Common myeloid progenitor, CD34-positive (primary cell): ENCODE measurements at regions of chr19 and their contacts with region 1.

Region 1: DNA sequence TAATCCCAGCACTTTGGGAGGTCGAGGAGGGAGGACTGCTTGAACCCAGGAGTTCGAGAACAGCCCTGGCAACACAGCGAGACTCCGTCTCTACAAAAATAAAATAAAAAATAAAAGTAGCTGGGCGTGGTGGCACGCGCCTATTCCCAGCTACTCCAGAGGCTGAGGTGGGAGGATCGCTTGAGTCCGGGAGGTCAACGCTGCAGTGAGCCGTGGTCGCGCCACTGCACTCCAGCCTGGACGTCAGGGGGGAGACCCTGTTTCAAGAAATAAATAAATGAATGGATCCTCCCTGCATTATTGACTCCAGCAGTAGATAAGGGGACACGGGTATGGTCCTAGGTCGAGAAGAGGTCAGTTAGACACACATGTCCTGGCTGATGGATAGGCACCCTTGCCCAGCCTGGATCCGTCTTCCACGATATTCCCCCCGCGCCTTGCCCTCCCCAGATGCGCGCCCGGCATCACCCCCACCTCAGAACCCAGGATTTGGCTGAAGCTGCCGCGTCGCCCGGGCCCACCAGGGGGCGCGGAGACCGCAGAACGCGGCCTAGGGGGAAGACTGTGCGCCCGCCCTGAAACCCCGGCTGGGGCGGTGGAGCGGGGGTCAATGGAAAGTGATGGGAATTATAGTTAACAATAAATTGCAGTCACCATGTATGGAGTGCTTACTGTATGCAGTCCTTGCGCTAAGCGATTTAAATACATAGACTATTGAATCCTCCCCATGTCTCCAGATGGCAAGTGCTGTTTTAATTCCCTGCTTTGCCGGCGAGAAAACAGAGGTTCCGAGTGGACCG is 2.1 kb upstream of the HOOK2 start:
- DNase-seq: peak; percentile 71 to 80 (median 79)
- H3K4me3 ChIP-seq: peak overlapping the region; percentile 27 to 90 (median 74)
- H3K27ac ChIP-seq: peak overlapping the region in 1 of 2 experiments; percentile 77
- H3K4me1 ChIP-seq: peaks cover 5 to 52% (median 51%) of the 10 kb centered on the region in 4 experiments
- H3K27me3 ChIP-seq: no peaks in the 10 kb centered on the region

Region 2: DNA sequence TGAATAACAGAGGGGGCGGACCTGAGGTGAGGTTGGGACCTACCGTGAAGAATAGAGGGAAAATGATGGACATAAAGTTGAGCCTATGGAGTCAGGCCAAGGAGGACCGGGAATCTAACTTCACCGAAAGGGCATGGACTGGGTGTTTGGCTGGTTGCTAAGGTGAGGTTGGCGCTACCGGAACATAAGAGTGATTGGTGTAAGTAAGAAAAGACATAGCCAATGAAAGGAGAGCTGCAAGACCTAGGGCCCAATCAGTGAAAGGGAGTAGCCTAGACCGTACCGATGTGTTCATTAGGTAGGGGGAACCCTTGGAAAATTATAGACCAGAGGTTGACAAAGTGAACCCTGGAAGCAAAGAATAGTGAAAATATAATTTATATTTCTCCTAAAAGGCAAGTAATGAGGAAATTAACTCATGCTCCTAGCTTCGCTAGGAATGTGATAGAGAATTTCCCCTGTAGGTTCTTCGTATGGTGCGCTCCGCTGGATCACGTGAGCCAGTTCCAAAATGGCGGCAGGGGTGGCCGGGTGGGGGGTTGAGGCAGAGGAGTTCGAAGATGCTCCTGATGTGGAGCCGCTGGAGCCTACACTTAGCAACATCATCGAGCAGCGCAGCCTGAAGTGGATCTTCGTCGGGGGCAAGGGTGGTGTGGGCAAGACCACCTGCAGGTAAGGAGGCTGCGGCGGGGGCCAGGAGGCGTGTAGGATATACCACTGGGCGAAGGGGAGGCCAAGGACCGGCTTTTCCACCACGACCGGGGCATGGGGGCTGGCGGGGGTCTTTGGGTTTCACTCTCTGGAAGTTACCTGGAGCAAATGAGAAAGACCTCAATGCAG is 40.2 kb before region 1 on chr19 and contains the start of gene GET3:
- CTCF ChIA-PET with region 1: interaction called, 776 read pairs
- POLR2A ChIA-PET with region 1: no interaction called
- DNase-seq: peak; percentile 99 to 100 (median 100)
- H3K4me3 ChIP-seq: peak within 1 kb of the TSS; percentile 76 to 95 (median 86)
- H3K27ac ChIP-seq: peak within 1 kb of the TSS; percentile 99 to 100
- H3K4me1 ChIP-seq: peaks cover 16 to 42% (median 37%) of the 10 kb centered on the region in 4 experiments
- H3K27me3 ChIP-seq: no peaks in the 10 kb centered on the region

Region 3: DNA sequence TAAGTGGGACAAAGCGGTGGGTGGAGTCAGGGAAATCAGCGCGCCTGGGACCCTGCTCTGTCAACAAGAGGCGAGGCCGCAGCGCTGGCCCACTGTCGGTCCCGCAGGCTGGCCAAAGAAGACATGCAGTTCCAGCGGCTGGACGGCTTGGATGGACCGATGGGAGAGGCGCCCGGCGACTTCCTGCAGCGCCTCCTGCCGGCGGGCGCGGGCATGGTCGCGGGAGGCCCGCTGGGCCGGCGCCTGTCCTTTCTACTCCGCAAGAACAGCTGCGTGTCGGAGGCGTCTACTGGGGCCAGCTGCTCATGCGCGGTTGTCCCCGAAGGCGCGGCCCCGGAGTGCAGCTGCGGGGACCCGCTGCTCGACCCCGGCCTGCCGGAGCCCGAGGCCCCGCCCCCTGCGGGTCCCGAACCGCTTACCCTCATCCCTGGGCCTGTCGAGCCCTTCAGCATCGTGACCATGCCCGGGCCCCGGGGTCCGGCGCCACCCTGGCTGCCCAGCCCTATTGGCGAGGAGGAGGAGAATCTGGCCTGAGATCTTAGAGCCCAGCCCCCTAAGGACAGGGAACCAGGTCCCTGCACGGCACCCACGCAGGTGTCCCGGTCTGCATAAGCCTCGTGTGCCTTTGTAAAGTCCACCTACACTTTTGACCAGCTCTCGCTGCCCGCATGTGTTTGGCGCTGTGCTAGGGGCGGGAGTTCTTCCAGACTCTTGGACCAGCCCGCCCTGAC is 19.7 kb before region 1 on chr19:
- CTCF ChIA-PET with region 1: interaction called, 54 read pairs
- POLR2A ChIA-PET with region 1: interaction called, 3 read pairs
- DNase-seq: peak; percentile 77 to 87 (median 87)
- H3K4me3 ChIP-seq: peak overlapping the region in 6 of 7 experiments; percentile 6 to 62 (median 37)
- H3K27ac ChIP-seq: no peak overlapping the region
- H3K4me1 ChIP-seq: peaks cover 0 to 8% (median 5%) of the 10 kb centered on the region in 4 experiments
- H3K27me3 ChIP-seq: peaks cover 0 to 19% (median 2%) of the 10 kb centered on the region in 5 experiments

Region 4: DNA sequence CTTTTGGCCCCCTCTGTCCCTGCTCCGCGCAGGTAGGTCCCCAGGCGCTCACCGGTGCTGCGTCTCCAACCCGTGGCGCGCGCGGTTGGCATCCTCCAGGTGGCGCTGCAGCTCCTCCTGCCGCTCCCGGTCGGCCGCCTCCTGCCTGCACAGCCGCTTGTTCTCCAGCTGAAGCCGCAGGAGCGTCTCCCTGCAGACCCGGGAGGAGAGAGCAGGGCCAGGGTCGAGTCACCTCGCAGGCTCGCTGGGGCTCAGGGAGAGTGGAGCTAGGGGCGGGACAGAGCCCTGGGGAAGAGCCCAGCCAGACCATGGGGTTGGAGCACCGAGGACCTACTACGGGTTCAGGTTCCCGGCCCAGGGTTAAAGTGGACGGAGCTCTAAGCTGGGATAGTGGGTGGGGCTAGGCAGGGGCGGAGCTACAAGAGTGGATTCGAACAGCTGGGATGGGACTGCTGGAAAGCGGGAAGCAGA is 11.3 kb before region 1 on chr19:
- CTCF ChIA-PET with region 1: interaction called, 54 read pairs
- POLR2A ChIA-PET with region 1: interaction called, 3 read pairs
- DNase-seq: peak in 1 of 3 donors; percentile 59
- H3K4me3 ChIP-seq: peak overlapping the region in 5 of 7 experiments; percentile 26 to 78 (median 51)
- H3K27ac ChIP-seq: no peak overlapping the region
- H3K4me1 ChIP-seq: peaks cover 2 to 6% (median 4%) of the 10 kb centered on the region in 4 experiments
- H3K27me3 ChIP-seq: no peaks in the 10 kb centered on the region

Region 5: DNA sequence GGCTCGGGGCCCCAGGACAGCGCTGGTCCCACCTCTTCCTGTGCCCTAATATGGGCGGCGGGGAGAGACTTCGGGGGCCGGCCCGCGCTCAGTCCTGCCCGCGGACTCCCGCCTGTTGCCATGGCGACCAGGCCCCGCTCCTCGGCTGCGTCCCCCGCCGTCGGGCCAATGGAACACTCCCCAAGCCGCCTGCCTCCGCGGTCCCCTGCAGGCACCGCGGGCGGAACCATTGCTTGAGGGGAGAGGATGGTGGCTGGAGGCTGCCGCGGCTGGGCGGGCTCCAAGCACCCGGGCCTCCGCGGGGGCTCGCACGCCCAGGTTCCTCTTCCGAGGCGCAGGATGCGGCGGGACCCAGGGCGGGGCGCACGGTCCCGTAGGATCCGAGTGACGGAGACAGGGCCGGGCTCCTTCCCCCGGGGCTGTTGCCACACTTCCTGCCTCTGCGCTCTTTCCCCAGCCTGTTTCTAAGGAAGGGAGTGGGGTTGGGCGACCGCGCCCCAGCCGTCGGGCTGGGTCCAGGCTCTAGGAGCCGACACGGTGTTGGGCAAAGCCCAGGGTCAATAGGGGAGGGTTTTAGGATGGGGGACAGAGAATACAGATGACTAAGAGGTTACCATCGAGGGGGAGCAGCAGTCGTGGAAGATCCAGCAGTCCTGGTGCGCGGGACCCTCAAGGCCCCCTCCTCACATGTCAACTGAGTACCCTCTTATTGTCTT is 12.6 kb after region 1 on chr19:
- CTCF ChIA-PET with region 1: interaction called, 612 read pairs
- POLR2A ChIA-PET with region 1: interaction called, 198 read pairs
- DNase-seq: peak; percentile 96 to 99 (median 97)
- H3K4me3 ChIP-seq: peak overlapping the region; percentile 41 to 99 (median 93)
- H3K27ac ChIP-seq: peak overlapping the region; percentile 94 to 96
- H3K4me1 ChIP-seq: peaks cover 19 to 76% (median 66%) of the 10 kb centered on the region in 4 experiments
- H3K27me3 ChIP-seq: no peaks in the 10 kb centered on the region

Region 6: DNA sequence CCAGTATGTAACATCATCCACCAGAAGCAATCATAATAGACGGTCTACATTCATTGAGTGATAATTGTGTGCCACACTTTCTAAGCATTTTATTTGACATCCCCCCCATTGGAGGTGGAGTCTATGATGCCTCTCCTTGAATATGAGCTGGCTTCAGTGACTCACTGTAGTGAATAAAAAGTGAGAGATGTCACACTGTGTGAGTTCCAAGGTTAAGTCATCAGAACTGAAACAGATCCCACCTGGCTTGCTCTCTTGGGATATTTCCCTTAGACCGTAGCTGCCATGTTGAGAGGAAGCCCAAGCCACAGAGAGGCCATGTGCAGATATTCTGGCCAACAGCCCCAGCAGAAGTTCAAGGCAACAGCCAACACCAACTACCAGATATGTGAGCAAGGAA is 44.3 kb after region 1 on chr19:
- CTCF ChIA-PET with region 1: no interaction called
- POLR2A ChIA-PET with region 1: no interaction called
- DNase-seq: no peak
- H3K4me3 ChIP-seq: no peak overlapping the region
- H3K27ac ChIP-seq: no peak overlapping the region
- H3K4me1 ChIP-seq: peaks cover 0 to 9% (median 1%) of the 10 kb centered on the region in 4 experiments
- H3K27me3 ChIP-seq: peaks cover 0 to 3% (median 3%) of the 10 kb centered on the region in 5 experiments

Region 7: GRCh38 chr19:12858041-12858928 is 80.9 kb after region 1 on chr19:
- CTCF ChIA-PET with region 1: no interaction called
- POLR2A ChIA-PET with region 1: no interaction called
- DNase-seq: no peak
- H3K4me3 ChIP-seq: no peak overlapping the region
- H3K27ac ChIP-seq: no peak overlapping the region
- H3K4me1 ChIP-seq: no peaks in the 10 kb centered on the region
- H3K27me3 ChIP-seq: peaks cover 0 to 1% (median 0%) of the 10 kb centered on the region in 5 experiments